Vagina (tissue), 2 donors: ENCODE measurements at regions of chr1 and their contacts with region 1.

Region 1: GRCh38 chr1:231357831-231358354 is 19.8 kb downstream of the SPRTN start:
- DNase-seq: no peak
- H3K4me3 ChIP-seq: no peak overlapping the region
- H3K27ac ChIP-seq: no peak overlapping the region
- H3K4me1 ChIP-seq: peaks cover 5% of the 10 kb centered on the region
- H3K27me3 ChIP-seq: no peaks in the 10 kb centered on the region
- CTCF ChIP-seq: peak; percentile 72 to 82 (median 81)
- POLR2A ChIP-seq: no peak

Region 2: GRCh38 chr1:231421993-231422764 is 64.3 kb after region 1 on chr1 and contains the start of gene EGLN1:
- intact Hi-C with region 1: loop called (anchors 10 kb)
- DNase-seq: peak in 1 of 2 donors; percentile 91
- H3K4me3 ChIP-seq: peak within 1 kb of the TSS; percentile 79 to 86
- H3K27ac ChIP-seq: peak within 1 kb of the TSS; percentile 99
- H3K4me1 ChIP-seq: peaks cover 40% of the 10 kb centered on the region
- H3K27me3 ChIP-seq: no peaks in the 10 kb centered on the region
- CTCF ChIP-seq: no peak
- POLR2A ChIP-seq: peak in 1 of 2 donors; percentile 84
- total RNA-seq, gene EGLN1: 26.3 TPM

Region 3: GRCh38 chr1:231584921-231585320 is 227.0 kb after region 1 on chr1:
- intact Hi-C with region 1: loop called (anchors 5 kb)
- DNase-seq: no peak
- H3K4me3 ChIP-seq: no peak overlapping the region
- H3K27ac ChIP-seq: no peak overlapping the region
- H3K4me1 ChIP-seq: no peaks in the 10 kb centered on the region
- H3K27me3 ChIP-seq: no peaks in the 10 kb centered on the region
- CTCF ChIP-seq: no peak
- POLR2A ChIP-seq: no peak